CD4-positive, alpha-beta T cell (primary cell): ENCODE measurements at regions of chr12 and their contacts with region 1.

Region 1: GRCh38 chr12:96343347-96343954 is 56.8 kb downstream of the CDK17 start:
- DNase-seq: peak in 3 of 14 experiments; percentile 51 to 65 (median 61)
- ATAC-seq: no peak
- H3K4me3 ChIP-seq: no peak overlapping the region
- H3K4me3 Mint-ChIP-seq: peak overlapping the region; percentile 35
- H3K27ac ChIP-seq: no peak overlapping the region
- H3K27ac Mint-ChIP-seq: peak overlapping the region; percentile 9
- H3K4me1 ChIP-seq: peaks cover 16% of the 10 kb centered on the region
- H3K4me1 Mint-ChIP-seq: peaks cover 77% of the 10 kb centered on the region
- H3K27me3 ChIP-seq: no peaks in the 10 kb centered on the region
- H3K27me3 Mint-ChIP-seq: no peaks in the 10 kb centered on the region
- CTCF ChIP-seq: no peak

Region 2: DNA sequence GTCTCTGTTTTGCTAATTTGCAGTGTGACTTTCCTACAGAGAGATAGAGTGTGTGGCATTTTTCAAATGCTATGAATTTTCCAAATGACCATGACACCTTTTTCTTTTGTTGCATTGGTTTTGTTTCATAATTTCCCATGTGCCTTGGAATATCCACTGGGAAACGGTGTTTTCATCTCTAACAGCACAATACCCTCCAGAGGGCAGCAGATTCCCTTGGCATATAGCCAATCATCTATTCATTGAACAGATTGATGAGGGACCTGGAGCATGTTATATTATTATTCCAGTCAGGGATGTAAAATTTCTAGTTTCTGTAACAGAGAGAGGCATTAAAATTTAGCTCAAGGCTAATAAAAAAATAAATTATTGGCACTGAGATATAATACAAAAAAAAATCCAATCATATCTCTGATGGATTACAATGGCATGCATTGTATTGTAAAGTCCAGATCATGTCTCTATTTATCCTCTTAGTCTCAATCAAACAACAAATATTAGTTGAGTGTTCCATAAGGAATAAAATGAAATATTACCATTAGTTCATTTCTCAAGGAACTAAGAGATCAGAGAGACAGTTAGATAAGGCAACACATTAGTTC is 523.2 kb before region 1 on chr12:
- CTCF ChIA-PET with region 1: no interaction called
- POLR2A ChIA-PET with region 1: no interaction called
- intact Hi-C with region 1: no loop called
- DNase-seq: peak in 3 of 14 experiments; percentile 13 to 30 (median 16)
- ATAC-seq: no peak
- H3K4me3 ChIP-seq: no peak overlapping the region
- H3K4me3 Mint-ChIP-seq: no peak overlapping the region
- H3K27ac ChIP-seq: no peak overlapping the region
- H3K27ac Mint-ChIP-seq: no peak overlapping the region
- H3K4me1 ChIP-seq: no peaks in the 10 kb centered on the region
- H3K4me1 Mint-ChIP-seq: no peaks in the 10 kb centered on the region
- H3K27me3 ChIP-seq: no peaks in the 10 kb centered on the region
- H3K27me3 Mint-ChIP-seq: peaks cover 36% of the 10 kb centered on the region
- CTCF ChIP-seq: no peak

Region 3: DNA sequence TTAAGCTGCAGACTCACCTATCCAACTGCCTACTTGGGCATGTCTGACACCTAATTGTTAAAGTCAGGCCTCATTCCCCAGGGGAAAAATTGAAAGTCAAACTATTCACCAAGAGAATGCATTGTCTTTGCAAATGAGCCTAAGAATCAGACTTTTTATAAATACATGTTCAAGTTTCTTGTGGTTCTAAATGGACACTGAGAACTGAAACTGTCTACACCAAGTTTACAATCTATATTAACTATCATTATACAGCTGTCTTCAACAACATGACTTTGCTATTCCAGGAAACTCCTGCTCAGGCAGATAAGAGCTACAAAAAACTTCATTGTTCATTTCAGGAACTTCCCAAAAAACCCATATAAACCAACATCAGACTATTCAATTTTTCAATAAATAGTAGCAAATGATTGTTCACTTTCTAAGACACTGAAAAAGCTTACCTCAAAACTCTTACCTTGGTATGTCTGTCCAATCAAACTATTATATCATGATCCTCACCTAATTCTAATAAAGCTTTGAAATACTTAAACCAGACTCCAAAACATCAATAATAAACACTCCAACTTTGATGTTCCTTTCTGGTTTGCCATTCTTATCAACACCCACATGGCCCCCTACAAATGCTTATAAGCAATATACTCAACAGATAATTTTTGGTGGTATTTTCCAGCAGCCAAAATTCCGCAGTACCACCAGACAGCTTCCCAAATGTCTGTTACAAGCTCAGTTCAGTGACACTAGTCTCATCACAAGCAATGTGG is 32.6 kb after region 1 on chr12:
- CTCF ChIA-PET with region 1: interaction called, 4 read pairs
- POLR2A ChIA-PET with region 1: interaction called, 14 read pairs
- intact Hi-C with region 1: loop called in 1 of 2 experiments (anchors 5 kb)
- DNase-seq: no peak
- ATAC-seq: no peak
- H3K4me3 ChIP-seq: no peak overlapping the region
- H3K4me3 Mint-ChIP-seq: peak overlapping the region; percentile 7
- H3K27ac ChIP-seq: peak overlapping the region; percentile 4 to 20
- H3K27ac Mint-ChIP-seq: peak overlapping the region; percentile 98
- H3K4me1 ChIP-seq: peaks cover 38% of the 10 kb centered on the region
- H3K4me1 Mint-ChIP-seq: peaks cover 82% of the 10 kb centered on the region
- H3K27me3 ChIP-seq: no peaks in the 10 kb centered on the region
- H3K27me3 Mint-ChIP-seq: no peaks in the 10 kb centered on the region
- CTCF ChIP-seq: no peak

Region 4: DNA sequence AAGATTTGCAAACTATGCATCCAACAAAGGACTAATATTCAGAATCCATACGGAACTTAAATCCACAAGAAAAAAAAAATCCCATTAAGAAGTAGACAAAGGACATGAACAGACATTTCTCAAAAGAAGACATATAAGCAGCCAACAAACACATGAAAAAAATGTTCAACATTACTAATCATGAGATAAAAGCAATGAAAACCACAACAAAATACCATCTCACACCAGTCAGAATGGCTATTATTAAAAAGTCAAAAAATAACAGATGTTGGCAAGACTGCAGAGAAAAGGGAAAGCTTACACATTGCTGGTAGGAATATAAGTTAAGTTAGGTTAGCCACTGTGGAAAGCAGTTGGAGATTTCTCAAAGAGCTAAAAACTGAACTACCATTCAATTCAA is 40.5 kb after region 1 on chr12:
- CTCF ChIA-PET with region 1: interaction called, 4 read pairs
- POLR2A ChIA-PET with region 1: interaction called, 14 read pairs
- intact Hi-C with region 1: loop called in 1 of 2 experiments (anchors 5 kb)
- DNase-seq: no peak
- ATAC-seq: no peak
- H3K4me3 ChIP-seq: no peak overlapping the region
- H3K4me3 Mint-ChIP-seq: peak overlapping the region; percentile 65
- H3K27ac ChIP-seq: no peak overlapping the region
- H3K27ac Mint-ChIP-seq: peak overlapping the region; percentile 40
- H3K4me1 ChIP-seq: peaks cover 43% of the 10 kb centered on the region
- H3K4me1 Mint-ChIP-seq: peaks cover 77% of the 10 kb centered on the region
- H3K27me3 ChIP-seq: no peaks in the 10 kb centered on the region
- H3K27me3 Mint-ChIP-seq: no peaks in the 10 kb centered on the region
- CTCF ChIP-seq: no peak